ENCODE measurements at regions of chr18 and their contacts with region 1.

Region 1: DNA sequence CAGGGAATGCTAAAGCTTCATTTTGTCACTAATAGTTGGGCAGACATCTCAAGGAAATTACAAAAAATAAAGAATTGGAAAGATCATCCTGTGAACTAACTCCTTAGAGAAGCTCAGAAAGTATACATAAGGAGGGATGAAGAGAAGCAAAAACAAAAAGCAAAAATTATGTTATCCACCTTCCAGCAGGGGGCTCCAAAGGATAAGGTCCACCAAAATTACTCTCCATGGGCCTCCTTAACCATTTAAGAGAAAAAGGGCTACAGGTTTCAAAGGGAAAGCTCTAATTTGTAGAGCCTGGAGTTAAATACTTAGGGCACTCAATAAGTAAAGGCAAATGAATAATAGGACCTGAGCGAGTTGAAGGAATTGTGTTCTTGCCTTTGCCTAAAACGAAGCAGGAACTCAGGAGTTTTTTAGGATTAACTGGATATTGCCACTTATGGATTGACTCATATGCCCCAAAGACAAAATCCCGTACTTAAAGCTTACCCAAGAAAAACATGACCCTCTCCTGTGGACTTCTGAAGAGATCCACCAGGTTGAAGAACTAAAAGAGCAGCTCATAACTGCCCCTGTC is 1167.9 kb downstream of the DSC3 start:
- DNase-seq: peak; percentile 23
- H3K4me3 ChIP-seq: no peak overlapping the region
- H3K27ac ChIP-seq: no peak overlapping the region
- H3K4me1 ChIP-seq: no peaks in the 10 kb centered on the region
- H3K27me3 ChIP-seq: no peaks in the 10 kb centered on the region
- CTCF ChIP-seq: peak; percentile 68
- EP300 ChIP-seq: no peak
- RAD21 ChIP-seq: peak; percentile 82

Region 2: DNA sequence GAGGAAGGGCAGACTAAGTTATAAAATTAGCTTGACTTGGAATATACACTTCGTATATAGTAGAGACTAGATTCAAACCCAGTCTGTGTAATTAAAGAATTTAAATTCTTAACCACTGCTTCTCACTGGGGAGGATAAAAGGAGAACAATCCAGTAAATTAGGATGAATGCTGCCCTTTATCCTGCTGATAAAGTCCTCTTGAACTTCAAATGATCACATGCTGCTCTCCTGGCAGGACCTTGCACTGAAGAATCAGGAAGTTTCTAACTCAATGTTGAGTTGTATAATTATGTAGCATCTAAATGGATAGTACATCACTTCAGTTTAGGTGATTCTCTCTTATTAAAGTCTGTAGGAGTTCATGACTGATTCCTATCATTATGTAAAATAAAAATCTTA is 11.8 kb before region 1 on chr18:
- CTCF ChIA-PET with region 1: interaction called, 17 read pairs
- POLR2A ChIA-PET with region 1: no interaction called
- DNase-seq: no peak
- H3K4me3 ChIP-seq: no peak overlapping the region
- H3K27ac ChIP-seq: no peak overlapping the region
- H3K4me1 ChIP-seq: no peaks in the 10 kb centered on the region
- H3K27me3 ChIP-seq: no peaks in the 10 kb centered on the region
- CTCF ChIP-seq: no peak
- EP300 ChIP-seq: no peak
- RAD21 ChIP-seq: no peak